Activated T-helper 1 cell treated with anti-CD3 and anti-CD28 coated beads, Interleukin-12 subunit alpha, Interleukin-12 subunit beta, Interleukin-2, Interleukin-4 antibody, amounts not matched to agents 30 ng/mL and 10 ng/mL and 1 ng/mL, durations not matched to agents 14 hours and 24 hours and 36 hours (primary cell): ENCODE measurements at regions of chr1 and their contacts with region 1.

Region 1: DNA sequence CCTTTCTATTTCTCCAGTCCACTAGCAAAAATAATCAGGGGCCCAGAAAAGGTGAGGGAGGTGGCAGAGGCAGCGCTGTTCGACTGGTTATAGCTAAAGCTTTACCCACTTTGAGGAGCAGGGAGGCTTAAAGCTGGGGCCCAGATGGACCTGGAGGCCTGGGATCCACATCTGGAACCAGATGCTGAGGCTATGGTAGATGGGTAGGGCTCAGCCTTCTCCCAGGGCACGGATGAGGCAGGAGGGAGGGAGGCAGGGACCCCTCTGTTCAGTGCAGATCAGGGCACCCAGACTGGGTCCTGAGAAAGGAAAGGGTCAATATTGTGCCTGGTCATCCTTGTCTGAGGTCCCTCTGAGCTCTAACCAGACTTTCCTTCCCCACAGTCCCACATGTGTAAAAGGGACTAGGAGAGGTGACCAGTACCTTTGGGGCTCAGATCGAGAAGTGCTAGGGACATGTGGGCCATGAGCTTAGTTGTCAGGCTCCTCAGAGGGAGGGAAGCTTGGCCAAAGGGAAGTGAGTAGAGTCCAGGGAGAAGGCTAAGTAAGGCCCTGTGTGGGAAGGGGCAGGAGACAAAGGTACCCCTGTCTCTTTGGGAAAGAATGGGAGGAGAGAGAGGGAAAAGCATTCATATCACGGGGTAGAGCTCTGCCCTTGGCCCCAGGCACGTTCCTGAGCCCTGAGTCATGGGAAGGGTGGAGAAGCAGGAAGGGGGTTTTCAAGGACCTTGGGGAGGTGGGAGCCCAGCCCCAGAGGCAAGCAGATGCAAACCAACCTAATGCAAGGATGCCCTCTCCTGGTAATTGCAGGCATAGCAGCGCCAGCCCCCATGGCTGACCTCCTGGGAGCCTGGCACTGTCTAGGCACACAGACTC is 15.4 kb downstream of the LMNA start:
- DNase-seq: peak; percentile 69
- H3K4me3 Mint-ChIP-seq: no peak overlapping the region
- H3K27ac Mint-ChIP-seq: peak overlapping the region; percentile 35
- H3K4me1 Mint-ChIP-seq: peaks cover 50% of the 10 kb centered on the region
- H3K27me3 Mint-ChIP-seq: peaks cover 2% of the 10 kb centered on the region

Region 2: GRCh38 chr1:156090822-156091188 is 39.1 kb before region 1 on chr1:
- intact Hi-C with region 1: loop called (anchors 1 kb)
- DNase-seq: peak; percentile 76
- H3K4me3 Mint-ChIP-seq: no peak overlapping the region
- H3K27ac Mint-ChIP-seq: no peak overlapping the region
- H3K4me1 Mint-ChIP-seq: peaks cover 3% of the 10 kb centered on the region
- H3K27me3 Mint-ChIP-seq: peaks cover 39% of the 10 kb centered on the region

Region 3: GRCh38 chr1:156096640-156097391 is 33.1 kb before region 1 on chr1:
- intact Hi-C with region 1: loop called (anchors 1 kb)
- DNase-seq: peak; percentile 82
- H3K4me3 Mint-ChIP-seq: peak overlapping the region; percentile 23
- H3K27ac Mint-ChIP-seq: peak overlapping the region; percentile 88
- H3K4me1 Mint-ChIP-seq: peaks cover 43% of the 10 kb centered on the region
- H3K27me3 Mint-ChIP-seq: peaks cover 25% of the 10 kb centered on the region

Region 4: GRCh38 chr1:156106624-156107488 is 23.1 kb before region 1 on chr1:
- intact Hi-C with region 1: loop called (anchors 1 kb)
- DNase-seq: no peak
- H3K4me3 Mint-ChIP-seq: peak overlapping the region; percentile 75
- H3K27ac Mint-ChIP-seq: peak overlapping the region; percentile 100
- H3K4me1 Mint-ChIP-seq: peaks cover 42% of the 10 kb centered on the region
- H3K27me3 Mint-ChIP-seq: peaks cover 23% of the 10 kb centered on the region

Region 5: GRCh38 chr1:156114101-156114916 is 15.6 kb before region 1 on chr1 and contains the start of gene LMNA:
- intact Hi-C with region 1: loop called (anchors 1 kb)
- DNase-seq: peak; percentile 57
- H3K4me3 Mint-ChIP-seq: peak within 1 kb of the TSS; percentile 91
- H3K27ac Mint-ChIP-seq: peak within 1 kb of the TSS; percentile 76
- H3K4me1 Mint-ChIP-seq: peaks cover 25% of the 10 kb centered on the region
- H3K27me3 Mint-ChIP-seq: peaks cover 53% of the 10 kb centered on the region
- total RNA-seq, gene LMNA: 80.1 and 84.1 TPM in 2 replicates

Region 6: GRCh38 chr1:156212833-156213643 is 83.1 kb after region 1 on chr1 and contains the start of gene PMF1:
- intact Hi-C with region 1: loop called (anchors 1 kb)
- DNase-seq: peak; percentile 93
- H3K4me3 Mint-ChIP-seq: peak within 1 kb of the TSS; percentile 92
- H3K27ac Mint-ChIP-seq: peak within 1 kb of the TSS; percentile 97
- H3K4me1 Mint-ChIP-seq: peaks cover 53% of the 10 kb centered on the region
- H3K27me3 Mint-ChIP-seq: no peaks in the 10 kb centered on the region
- total RNA-seq, gene PMF1: 105 and 111 TPM in 2 replicates